Mucosa of descending colon (tissue), 3 donors: ENCODE measurements at regions of chr15 and their contacts with region 1.

Region 1: GRCh38 chr15:57527382-57528091 is 64.2 kb upstream of the MYZAP start:
- DNase-seq: peak in 1 of 3 donors; percentile 52
- ATAC-seq: peak; percentile 89
- H3K4me3 ChIP-seq: no peak overlapping the region
- H3K4me1 ChIP-seq: no peaks in the 10 kb centered on the region
- CTCF ChIP-seq: peak; percentile 29

Region 2: GRCh38 chr15:57340682-57341259 is 186.8 kb before region 1 on chr15:
- intact Hi-C with region 1: loop called (anchors 2 to 5 kb)
- DNase-seq: peak in 2 of 3 donors; percentile 52 to 60
- ATAC-seq: peak; percentile 88
- H3K4me3 ChIP-seq: no peak overlapping the region
- H3K4me1 ChIP-seq: no peaks in the 10 kb centered on the region
- CTCF ChIP-seq: peak; percentile 51